Activated CD4-positive, alpha-beta memory T cell treated with anti-CD3 and anti-CD28 coated beads for 36 hours (primary cell): ENCODE measurements at regions of chr11 and their contacts with region 1.

Region 1: GRCh38 chr11:76807206-76807875 is 24.2 kb downstream of the TSKU start:
- DNase-seq: peak; percentile 81
- H3K4me3 Mint-ChIP-seq: no peak overlapping the region
- H3K27ac Mint-ChIP-seq: no peak overlapping the region
- H3K4me1 Mint-ChIP-seq: peaks cover 32% of the 10 kb centered on the region
- H3K27me3 Mint-ChIP-seq: peaks cover 22% of the 10 kb centered on the region

Region 2: DNA sequence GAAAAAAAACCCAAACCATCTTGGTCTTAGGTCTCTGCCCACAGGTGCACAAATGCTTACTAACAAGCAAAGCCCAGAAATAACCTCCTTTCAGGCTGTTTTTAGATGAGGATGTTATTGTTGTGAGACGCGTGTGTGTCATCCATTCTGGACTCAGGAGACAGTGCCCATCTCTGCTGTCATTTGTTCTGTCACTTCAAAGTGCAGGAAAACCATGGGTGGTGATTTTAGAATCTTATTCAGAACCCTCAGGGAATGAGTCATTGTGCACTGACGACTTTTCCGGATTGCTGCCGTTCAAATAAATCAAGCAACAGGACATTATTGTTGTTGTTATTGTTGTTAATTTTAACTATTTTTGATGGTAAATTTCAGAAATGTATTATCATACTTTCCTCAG is 247.1 kb before region 1 on chr11:
- CTCF ChIA-PET with region 1: no interaction called
- POLR2A ChIA-PET with region 1: no interaction called
- intact Hi-C with region 1: loop called (anchors 10 kb)
- DNase-seq: peak; percentile 61
- H3K4me3 Mint-ChIP-seq: no peak overlapping the region
- H3K27ac Mint-ChIP-seq: peak overlapping the region; percentile 74
- H3K4me1 Mint-ChIP-seq: peaks cover 34% of the 10 kb centered on the region
- H3K27me3 Mint-ChIP-seq: peaks cover 16% of the 10 kb centered on the region

Region 3: DNA sequence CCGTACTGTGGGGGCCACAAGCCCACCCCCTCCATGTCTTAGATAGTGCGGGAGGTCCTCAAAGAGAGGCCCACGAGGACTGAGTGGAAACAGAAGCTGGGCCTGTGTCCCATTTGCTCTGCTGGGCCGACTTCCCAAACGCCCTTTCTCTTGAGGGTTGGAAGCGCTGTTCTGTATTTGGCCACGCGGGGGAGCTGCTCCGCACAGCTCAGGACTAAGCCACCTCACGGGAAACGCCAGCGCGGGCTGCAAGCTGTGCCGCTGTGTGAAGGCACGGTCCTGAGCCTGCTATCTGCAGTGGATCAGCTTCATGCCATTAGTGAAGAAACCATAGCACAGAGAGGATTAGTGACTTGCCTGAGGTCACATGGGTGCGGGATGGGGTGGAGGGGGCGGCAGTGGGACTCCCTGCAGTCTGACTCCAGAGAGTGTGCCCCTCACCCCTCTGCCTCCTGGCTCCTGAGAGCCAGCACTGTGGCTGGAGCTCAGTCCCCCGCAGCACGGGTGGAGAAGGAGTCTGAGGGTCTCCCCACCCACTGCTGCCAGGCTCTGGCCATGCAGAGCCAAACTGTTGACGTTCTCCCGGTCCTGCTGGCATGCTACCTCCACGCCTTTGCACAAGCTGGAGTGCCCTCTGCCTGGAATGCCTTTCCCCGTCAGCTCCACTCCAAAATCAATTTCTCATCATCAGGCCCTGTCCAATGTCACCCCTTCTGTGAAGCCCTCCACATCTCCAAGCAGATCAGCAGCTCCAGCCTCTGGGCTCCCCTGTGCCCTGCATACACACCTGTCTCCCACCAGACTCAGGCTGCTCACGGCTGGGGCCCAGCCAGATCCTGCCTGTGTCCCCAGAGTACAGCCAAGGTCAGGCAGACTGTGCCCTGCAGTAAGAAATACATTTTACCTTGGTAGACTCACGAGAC is 85.3 kb before region 1 on chr11:
- CTCF ChIA-PET with region 1: interaction called, 28 read pairs
- POLR2A ChIA-PET with region 1: no interaction called
- intact Hi-C with region 1: no loop called
- DNase-seq: peak; percentile 85
- H3K4me3 Mint-ChIP-seq: no peak overlapping the region
- H3K27ac Mint-ChIP-seq: no peak overlapping the region
- H3K4me1 Mint-ChIP-seq: peaks cover 9% of the 10 kb centered on the region
- H3K27me3 Mint-ChIP-seq: peaks cover 10% of the 10 kb centered on the region

Region 4: GRCh38 chr11:76860539-76861475 is 53.5 kb after region 1 on chr11 and contains the start of gene ACER3:
- CTCF ChIA-PET with region 1: interaction called, 3 read pairs
- POLR2A ChIA-PET with region 1: no interaction called
- intact Hi-C with region 1: loop called (anchors 2 kb)
- DNase-seq: peak; percentile 91
- H3K4me3 Mint-ChIP-seq: peak within 1 kb of the TSS; percentile 80
- H3K27ac Mint-ChIP-seq: no peak within 1 kb of the TSS
- H3K4me1 Mint-ChIP-seq: peaks cover 15% of the 10 kb centered on the region
- H3K27me3 Mint-ChIP-seq: no peaks in the 10 kb centered on the region
- total RNA-seq, gene ACER3: 10.5 to 10.9 TPM

Region 5: DNA sequence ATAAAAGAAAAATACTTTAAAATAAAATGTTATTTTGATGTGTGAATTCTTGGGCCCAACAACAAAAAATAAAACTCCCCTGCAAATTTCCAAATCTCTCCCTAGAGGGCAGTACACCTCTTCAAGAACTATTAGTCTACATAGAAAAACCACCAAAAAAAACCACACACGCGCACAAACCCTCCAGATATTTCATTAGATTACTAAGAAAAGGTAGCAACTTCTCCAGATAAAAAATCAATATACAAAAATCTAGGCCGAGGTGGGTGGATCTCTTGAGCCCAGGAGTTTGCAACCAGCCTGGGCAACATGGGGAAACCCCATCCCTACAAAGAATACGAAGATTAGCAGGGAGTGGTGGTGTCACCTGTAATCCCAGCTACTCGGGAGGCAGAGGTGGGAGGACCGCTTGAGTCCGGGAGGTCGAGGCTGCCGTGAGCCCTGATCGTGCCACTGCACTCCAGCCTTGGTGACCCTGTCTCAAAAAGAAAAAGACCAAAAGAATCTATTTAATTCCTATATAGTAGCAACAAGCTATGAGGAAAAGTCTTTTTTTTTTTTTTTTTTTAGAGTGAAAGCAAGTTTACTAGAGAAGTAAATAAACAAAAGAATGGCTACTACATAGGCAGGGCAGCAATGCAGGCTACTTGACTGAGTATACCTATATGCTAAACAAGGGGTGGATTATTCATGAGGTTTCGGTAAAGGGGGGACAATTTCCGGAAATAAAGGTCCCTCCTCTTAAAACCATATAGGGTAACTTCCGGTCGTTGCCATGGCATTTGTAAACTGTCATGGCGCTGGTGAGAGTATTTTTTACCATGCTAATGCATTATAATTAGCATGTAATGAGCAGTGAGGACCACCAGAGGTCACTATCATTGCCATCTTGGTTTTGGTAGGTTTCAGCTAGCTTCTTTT is 239.9 kb after region 1 on chr11:
- CTCF ChIA-PET with region 1: interaction called, 6 read pairs
- POLR2A ChIA-PET with region 1: no interaction called
- intact Hi-C with region 1: loop called (anchors 2 kb)
- DNase-seq: peak; percentile 81
- H3K4me3 Mint-ChIP-seq: peak overlapping the region; percentile 62
- H3K27ac Mint-ChIP-seq: peak overlapping the region; percentile 51
- H3K4me1 Mint-ChIP-seq: peaks cover 13% of the 10 kb centered on the region
- H3K27me3 Mint-ChIP-seq: peaks cover 6% of the 10 kb centered on the region

Region 6: GRCh38 chr11:77113382-77114088 is 306.2 kb after region 1 on chr11:
- CTCF ChIA-PET with region 1: no interaction called
- POLR2A ChIA-PET with region 1: no interaction called
- intact Hi-C with region 1: loop called (anchors 10 kb)
- DNase-seq: peak; percentile 34
- H3K4me3 Mint-ChIP-seq: no peak overlapping the region
- H3K27ac Mint-ChIP-seq: no peak overlapping the region
- H3K4me1 Mint-ChIP-seq: no peaks in the 10 kb centered on the region
- H3K27me3 Mint-ChIP-seq: no peaks in the 10 kb centered on the region